SK-N-SH (cell line): ENCODE measurements at regions of chr1 and their contacts with region 1.

Region 1: DNA sequence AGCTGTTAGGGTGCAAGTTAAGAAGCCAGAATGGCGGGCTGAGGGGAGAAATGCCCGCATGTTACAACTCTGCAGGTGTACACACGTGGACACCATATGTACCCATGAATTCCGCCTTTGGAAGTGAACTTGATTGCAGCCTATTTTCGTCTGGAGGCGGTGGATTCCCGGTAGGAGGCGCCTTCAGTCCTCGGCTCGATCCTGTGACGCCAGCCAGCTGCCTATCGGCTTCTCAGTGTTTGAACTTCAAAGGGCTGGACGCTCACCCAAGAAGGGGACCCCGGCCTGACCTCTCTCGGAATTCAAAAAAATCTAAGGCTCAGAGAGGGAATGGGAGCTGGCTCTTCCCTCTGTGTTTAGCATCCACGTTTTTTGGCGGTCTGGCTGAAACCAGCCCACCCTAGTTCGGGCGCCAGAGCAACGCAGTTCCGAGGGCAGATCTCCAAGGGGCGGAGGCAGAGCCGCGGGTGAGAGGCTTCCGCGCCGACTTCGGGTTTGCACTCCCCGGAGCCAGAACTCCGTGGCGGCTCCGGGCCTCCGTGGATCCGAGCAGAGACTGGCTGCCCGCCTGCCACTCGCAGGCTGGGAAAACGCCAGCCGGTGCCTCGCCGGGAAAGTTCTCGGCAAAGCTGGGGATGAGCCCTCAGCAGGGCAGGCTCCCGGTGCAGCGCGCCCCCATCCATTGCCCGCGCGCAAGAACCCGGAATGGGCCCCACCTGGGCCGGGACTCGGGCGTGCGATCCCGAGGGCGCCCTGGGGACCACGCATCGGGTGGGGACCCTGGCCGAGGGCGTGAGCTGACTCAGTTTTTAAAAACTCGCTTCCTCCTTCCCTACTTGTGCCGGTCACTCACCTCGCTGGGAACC is 996 bp upstream of the TMEM51 start:
- DNase-seq: peak; percentile 79
- H3K4me3 ChIP-seq: peak overlapping the region; percentile 77 to 84
- H3K27ac ChIP-seq: peak overlapping the region; percentile 62 to 100
- H3K4me1 ChIP-seq: peaks cover 4 to 70% of the 10 kb centered on the region in 2 experiments; a peak in 3 of 4 replicates
- H3K27me3 ChIP-seq: no peaks in the 10 kb centered on the region
- CTCF ChIP-seq: peak; percentile 76
- EP300 ChIP-seq: peak in 1 of 2 experiments; percentile 29; a peak in 1 of 4 replicates
- RAD21 ChIP-seq: peak; percentile 76

Region 2: GRCh38 chr1:15141935-15142539 is 10.5 kb before region 1 on chr1:
- CTCF ChIA-PET with region 1: interaction called, 70 read pairs
- POLR2A ChIA-PET with region 1: interaction called, 88 read pairs
- DNase-seq: no peak
- H3K4me3 ChIP-seq: no peak overlapping the region
- H3K27ac ChIP-seq: peak overlapping the region in 1 of 2 experiments; percentile 97; a peak in 2 of 4 replicates
- H3K4me1 ChIP-seq: peaks cover 3 to 45% of the 10 kb centered on the region in 2 experiments; a peak in 3 of 4 replicates
- H3K27me3 ChIP-seq: no peaks in the 10 kb centered on the region
- CTCF ChIP-seq: peak; percentile 22; the same call in 1 of the 2 replicates
- EP300 ChIP-seq: peak; percentile 37 to 87; a peak in 3 of 4 replicates
- RAD21 ChIP-seq: no peak

Region 3: DNA sequence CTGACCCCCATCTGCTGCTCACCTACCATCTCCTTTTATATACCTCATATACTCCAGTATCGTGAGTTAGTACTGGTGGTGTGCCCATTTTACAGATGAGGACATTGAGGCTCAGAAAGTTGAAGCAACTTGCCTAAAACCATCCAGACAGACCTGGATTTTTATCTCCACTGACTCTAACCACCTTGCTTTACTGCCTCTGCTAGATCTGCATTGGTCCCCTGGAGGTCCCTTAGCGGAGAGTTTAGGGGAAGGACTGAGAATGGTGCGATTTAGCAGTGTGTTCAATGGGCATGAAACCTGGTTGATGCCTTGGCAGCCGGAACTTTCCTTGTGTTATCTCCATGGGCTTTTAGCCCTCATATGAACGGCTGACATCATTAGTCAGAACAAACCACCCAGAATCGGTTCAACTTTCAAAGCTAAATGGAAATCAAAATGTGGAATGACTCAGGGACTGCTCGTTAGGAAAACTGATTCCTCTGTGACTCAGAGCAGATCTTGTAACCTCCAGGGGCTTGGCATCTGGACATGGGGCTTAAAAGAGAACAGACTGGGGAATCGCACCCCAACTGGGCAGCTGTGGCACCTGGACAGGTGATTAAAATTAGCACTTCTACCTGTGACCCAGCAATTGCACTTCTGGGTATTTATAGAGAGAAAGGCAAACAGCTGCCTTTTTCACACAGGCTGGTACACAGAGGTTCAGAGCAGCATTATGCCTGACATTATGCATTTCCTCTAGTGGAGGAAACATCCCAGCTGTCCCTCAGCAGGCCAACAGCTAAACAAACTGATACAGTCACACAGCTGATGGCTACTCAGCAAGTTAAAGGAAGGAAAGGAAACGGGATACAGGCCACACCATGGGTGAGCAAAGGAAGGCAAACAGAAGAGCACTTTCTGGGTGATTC is 26.3 kb after region 1 on chr1:
- CTCF ChIA-PET with region 1: interaction called, 8 read pairs
- POLR2A ChIA-PET with region 1: interaction called, 11 read pairs
- DNase-seq: no peak
- H3K4me3 ChIP-seq: no peak overlapping the region
- H3K27ac ChIP-seq: peak overlapping the region; percentile 88 to 91
- H3K4me1 ChIP-seq: peaks cover 11 to 46% of the 10 kb centered on the region in 2 experiments; a peak in 3 of 4 replicates
- H3K27me3 ChIP-seq: no peaks in the 10 kb centered on the region
- CTCF ChIP-seq: no peak
- EP300 ChIP-seq: peak in 1 of 2 experiments; percentile 90; a peak in 2 of 4 replicates
- RAD21 ChIP-seq: no peak

Region 4: DNA sequence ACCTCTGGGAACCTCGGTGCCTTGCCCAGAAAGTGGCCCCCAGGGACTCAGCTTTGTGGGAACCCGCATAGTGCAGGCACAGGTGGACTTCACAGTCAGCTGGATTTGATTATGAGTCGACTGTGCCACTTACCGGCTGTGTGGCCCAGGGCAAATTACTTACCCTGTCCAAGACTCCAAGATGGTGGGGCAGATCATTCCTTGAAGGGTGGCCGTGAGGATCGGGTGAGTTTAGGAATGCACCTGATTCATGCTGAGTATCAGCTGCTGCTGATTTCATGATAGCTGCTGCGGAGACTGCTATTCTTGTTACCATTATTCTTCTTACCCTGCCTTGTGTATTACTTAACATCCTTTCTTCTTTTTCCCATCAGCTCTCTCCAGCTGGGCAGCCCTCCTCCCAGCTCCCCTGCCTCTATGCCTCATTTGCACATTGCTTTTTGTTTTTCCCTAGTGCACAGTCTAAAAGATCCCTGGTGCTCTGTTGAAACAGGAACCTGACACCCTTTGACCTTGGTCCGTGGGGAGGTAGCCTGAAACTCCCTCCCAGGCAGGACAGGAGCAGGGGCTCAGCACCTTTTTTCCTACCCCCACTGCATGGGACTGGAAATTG is 54.0 kb after region 1 on chr1:
- CTCF ChIA-PET with region 1: interaction called, 132 read pairs
- POLR2A ChIA-PET with region 1: interaction called, 14 read pairs
- DNase-seq: no peak
- H3K4me3 ChIP-seq: no peak overlapping the region
- H3K27ac ChIP-seq: no peak overlapping the region; a peak in 1 of 4 replicates
- H3K4me1 ChIP-seq: peaks cover 7 to 44% of the 10 kb centered on the region in 2 experiments; a peak in 1 of 4 replicates
- H3K27me3 ChIP-seq: no peaks in the 10 kb centered on the region
- CTCF ChIP-seq: no peak
- EP300 ChIP-seq: peak in 1 of 2 experiments; percentile 47; a peak in 1 of 4 replicates
- RAD21 ChIP-seq: no peak

Region 5: DNA sequence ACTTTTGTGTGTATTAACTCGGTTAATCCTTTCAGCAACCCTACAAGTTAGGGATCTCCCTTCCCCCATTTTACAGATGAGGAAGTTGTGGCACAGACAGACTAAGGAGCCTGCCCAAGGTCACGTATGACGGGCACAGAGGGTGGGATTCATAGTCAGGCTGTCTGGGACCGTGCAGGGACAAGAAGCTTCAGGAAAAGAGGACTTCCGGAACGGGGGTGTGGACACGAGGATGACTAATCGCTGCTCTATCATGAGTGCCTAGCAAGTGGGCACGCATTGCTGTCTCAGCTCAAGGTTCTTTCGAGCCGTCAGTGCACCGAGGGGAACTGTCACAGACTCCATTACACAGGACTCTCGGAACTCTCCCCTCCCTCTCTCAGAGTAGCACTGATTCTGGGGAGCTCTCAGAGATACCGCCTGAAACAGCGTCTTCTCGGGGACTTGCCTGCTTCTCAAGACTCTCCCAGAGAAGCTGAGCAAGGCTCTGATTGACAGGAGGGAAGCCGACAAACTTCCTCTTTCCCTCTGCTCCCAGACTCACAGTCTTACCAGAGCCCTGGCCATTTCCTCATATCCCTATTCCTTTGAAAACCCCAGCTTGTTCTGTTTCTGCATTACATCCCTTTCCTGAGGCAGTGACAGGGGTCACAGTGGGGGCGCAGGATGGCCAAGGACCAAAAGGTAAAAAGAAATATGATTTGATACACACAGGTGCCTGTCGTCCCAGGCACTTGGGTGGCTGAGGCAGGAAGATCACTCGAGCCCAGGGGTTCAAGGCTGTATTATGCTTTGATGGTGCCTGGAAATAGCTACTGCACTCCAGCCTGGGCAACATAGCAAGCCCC is 108.8 kb after region 1 on chr1:
- CTCF ChIA-PET with region 1: interaction called, 17 read pairs
- POLR2A ChIA-PET with region 1: no interaction called
- DNase-seq: no peak
- H3K4me3 ChIP-seq: no peak overlapping the region
- H3K27ac ChIP-seq: no peak overlapping the region
- H3K4me1 ChIP-seq: no peaks in the 10 kb centered on the region; a peak in 1 of 4 replicates
- H3K27me3 ChIP-seq: no peaks in the 10 kb centered on the region
- CTCF ChIP-seq: no peak
- EP300 ChIP-seq: no peak
- RAD21 ChIP-seq: no peak

Region 6: GRCh38 chr1:15304701-15305467 is 152.3 kb after region 1 on chr1:
- CTCF ChIA-PET with region 1: interaction called, 25 read pairs
- POLR2A ChIA-PET with region 1: no interaction called
- DNase-seq: peak; percentile 79
- H3K4me3 ChIP-seq: peak overlapping the region in 1 of 2 experiments; percentile 38; a peak in 1 of 4 replicates
- H3K27ac ChIP-seq: no peak overlapping the region
- H3K4me1 ChIP-seq: peaks cover 0 to 6% of the 10 kb centered on the region in 2 experiments; a peak in 1 of 4 replicates
- H3K27me3 ChIP-seq: no peaks in the 10 kb centered on the region
- CTCF ChIP-seq: peak; percentile 94
- EP300 ChIP-seq: no peak
- RAD21 ChIP-seq: peak; percentile 84

Region 7: DNA sequence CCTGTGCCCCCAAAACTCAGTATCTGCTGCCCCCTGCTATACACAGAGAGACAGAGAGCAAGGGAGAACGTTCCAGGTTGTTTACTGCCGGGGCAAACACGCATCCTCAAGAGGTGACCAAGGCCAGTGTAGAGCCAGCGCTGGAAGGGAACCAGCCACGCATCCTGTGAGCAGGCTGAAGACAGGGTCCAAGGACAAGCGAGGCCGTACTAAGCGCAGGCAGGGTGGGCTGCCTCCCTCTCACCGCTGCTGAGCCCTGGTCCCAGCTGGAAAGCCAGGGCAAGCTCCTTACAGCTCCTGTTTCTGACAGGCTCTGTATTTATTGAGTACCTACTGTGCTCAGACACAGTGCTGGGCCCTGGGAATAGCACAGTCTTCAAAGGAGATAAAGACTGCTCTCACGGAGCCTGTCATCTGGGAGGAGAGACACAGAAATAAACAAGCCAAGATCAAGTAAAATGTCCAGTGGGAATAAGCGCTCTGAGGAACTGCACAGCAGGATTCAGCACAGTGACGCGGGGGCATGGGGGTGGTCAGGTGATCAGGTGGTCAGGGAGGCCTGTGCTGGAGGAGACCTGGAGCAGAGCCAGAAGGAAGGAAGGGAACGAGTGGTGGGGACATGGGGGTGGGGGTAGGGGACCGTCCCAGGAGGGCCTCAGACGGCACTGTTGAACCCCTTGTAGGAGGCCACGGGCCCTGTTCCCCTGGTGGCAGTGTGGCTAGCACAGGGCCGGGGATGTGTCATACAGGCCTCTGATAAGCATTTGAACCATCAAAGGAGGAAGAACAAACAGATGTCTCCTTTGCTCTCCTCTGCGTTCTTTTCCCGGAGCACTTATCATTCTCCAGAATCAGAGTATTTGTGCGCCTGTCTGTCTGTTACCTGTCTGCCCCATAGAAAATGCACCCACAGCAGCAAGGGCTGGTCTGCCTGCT is 219.3 kb after region 1 on chr1:
- CTCF ChIA-PET with region 1: no interaction called
- POLR2A ChIA-PET with region 1: no interaction called
- DNase-seq: peak; percentile 44
- H3K4me3 ChIP-seq: no peak overlapping the region
- H3K27ac ChIP-seq: no peak overlapping the region
- H3K4me1 ChIP-seq: peaks cover 3 to 12% of the 10 kb centered on the region in 2 experiments; a peak in 2 of 4 replicates
- H3K27me3 ChIP-seq: no peaks in the 10 kb centered on the region
- CTCF ChIP-seq: no peak
- EP300 ChIP-seq: no peak
- RAD21 ChIP-seq: no peak